ENCODE measurements at regions of chrX and their contacts with region 1.

Region 1: GRCh38 chrX:135484641-135485289 is 35.7 kb upstream of the INTS6L start:
- DNase-seq: no peak
- H3K4me3 ChIP-seq: no peak overlapping the region
- H3K27ac ChIP-seq: no peak overlapping the region
- H3K4me1 ChIP-seq: no peaks in the 10 kb centered on the region
- H3K27me3 ChIP-seq: peaks cover 4% of the 10 kb centered on the region
- CTCF ChIP-seq: peak; percentile 55

Region 2: DNA sequence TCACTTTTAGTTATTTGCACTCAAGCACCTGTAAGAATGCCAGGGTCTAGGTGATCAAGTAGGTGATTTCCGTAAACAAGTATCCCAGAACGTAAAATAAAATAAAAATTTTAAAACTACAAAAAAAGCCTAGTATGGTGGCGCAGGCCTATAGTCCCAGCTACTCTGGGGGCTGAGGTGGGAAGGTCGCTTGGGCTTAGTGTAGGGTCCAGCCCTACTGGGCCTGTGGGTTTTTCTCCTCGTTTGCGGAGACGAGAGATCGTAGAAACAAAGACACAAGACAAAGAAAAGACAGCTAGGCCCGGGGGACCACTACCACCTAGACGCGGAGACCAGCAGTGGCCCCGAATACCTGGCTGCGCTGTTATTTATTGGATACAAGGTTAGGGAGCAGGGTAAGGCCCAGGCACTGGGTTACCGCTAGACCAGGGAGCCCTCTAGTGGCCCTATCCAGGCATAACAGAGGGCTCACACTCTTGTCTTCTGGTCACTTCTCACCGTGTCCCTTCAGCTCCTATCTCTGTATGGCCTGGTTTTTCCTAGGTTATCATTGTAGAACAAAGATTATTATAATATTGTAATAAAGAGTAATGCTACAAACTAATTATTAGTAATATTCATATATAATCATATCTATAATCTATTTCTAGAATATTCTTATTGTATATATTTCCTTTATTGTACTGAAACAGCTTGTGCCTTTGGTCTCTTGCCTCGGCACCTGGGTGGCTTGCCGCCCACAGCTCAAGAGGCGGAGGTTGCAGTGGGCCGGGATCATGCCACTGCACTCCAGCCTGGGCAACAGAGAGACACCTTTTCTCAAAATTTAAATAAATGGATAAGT is 447.1 kb after region 1 on chrX:
- CTCF ChIA-PET with region 1: no interaction called
- POLR2A ChIA-PET with region 1: no interaction called
- intact Hi-C with region 1: loop called (anchors 10 kb)
- DNase-seq: peak; percentile 43 to 49
- H3K4me3 ChIP-seq: no peak overlapping the region
- H3K27ac ChIP-seq: no peak overlapping the region
- H3K4me1 ChIP-seq: no peaks in the 10 kb centered on the region
- H3K27me3 ChIP-seq: peaks cover 60% of the 10 kb centered on the region
- CTCF ChIP-seq: peak; percentile 83